ENCODE measurements at regions of chr5 and their contacts with region 1.

Region 1: DNA sequence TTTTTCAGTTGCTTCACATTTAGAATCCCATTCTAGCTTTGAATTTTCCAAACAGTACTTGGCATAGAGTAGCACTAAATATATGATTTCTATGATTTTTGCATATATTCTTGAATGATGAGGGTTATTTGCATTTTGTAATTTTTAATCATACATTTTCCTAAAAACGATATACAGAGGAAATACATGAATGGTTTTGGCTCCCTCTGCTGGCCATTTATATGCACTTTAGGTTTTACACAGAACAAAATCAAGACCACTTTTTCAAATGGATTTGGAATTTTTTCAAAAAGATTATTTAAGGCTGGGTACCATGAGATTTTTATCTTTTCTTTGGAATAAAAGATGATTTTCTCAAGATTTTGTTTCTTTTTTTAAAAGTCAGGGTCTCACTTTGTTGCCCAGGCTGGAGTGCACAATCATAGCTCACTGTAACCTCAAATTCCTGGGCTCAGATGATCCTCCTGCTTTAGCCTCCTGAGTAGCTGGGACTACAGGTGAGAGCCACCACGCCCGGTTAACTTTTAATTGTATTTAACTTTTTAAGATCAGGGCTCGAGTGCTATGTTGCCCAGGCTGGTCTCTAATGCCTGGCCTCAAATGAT is 16.7 kb upstream of the COMMD10 start:
- DNase-seq: no peak
- H3K4me3 ChIP-seq: no peak overlapping the region
- H3K27me3 ChIP-seq: peaks cover 4% of the 10 kb centered on the region
- CTCF ChIP-seq: peak; percentile 66

Region 2: DNA sequence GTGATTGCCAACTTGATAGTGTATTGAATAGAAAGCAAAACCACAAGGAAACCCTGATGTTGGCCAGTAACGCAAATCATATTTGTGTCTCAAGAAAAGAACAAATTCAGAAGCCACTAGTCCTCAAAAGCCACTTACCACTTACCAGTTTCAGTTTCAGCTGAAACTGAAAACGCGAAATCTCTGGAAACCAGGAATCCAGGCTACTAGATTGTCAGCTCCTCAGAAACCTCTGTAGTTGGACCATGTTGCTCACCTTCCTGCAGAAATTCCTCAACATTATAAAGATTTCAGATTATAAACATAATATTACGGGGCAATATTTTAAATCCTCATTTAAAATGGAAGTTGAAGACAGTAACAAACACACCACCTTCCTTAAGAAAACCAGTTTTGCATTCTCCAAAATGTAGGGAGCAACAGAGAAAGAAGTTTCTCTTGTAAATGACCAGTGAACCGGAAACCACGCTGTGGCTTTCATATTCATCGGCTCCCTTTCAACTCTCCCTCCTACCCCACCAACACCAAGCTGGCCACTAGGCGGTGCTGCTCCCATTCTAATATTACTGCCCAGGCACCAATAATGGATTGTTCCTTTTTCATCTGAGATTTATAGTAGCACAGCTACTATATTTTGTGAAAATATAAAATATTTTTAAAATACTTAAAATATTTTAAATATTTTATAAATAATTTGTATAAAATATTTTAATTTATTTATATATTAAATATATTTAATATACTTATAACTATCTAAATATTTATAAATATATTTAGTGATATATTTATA is 433.6 kb before region 1 on chr5:
- CTCF ChIA-PET with region 1: interaction called, 29 read pairs
- POLR2A ChIA-PET with region 1: no interaction called
- DNase-seq: no peak
- H3K4me3 ChIP-seq: peak overlapping the region; percentile 29
- H3K27me3 ChIP-seq: no peaks in the 10 kb centered on the region; the same call in 1 of the 2 replicates
- CTCF ChIP-seq: peak; percentile 87

Region 3: GRCh38 chr5:115888027-115888426 is 180.1 kb before region 1 on chr5:
- CTCF ChIA-PET with region 1: interaction called, 16 read pairs
- POLR2A ChIA-PET with region 1: no interaction called
- DNase-seq: peak; percentile 7
- H3K4me3 ChIP-seq: no peak overlapping the region
- H3K27me3 ChIP-seq: no peaks in the 10 kb centered on the region
- CTCF ChIP-seq: peak; percentile 23; the same call in 1 of the 2 replicates

Region 4: GRCh38 chr5:116078199-116078598 is 10.1 kb after region 1 on chr5:
- CTCF ChIA-PET with region 1: interaction called, 10 read pairs
- POLR2A ChIA-PET with region 1: no interaction called
- DNase-seq: no peak
- H3K4me3 ChIP-seq: no peak overlapping the region
- H3K27me3 ChIP-seq: no peaks in the 10 kb centered on the region
- CTCF ChIP-seq: no peak

Region 5: DNA sequence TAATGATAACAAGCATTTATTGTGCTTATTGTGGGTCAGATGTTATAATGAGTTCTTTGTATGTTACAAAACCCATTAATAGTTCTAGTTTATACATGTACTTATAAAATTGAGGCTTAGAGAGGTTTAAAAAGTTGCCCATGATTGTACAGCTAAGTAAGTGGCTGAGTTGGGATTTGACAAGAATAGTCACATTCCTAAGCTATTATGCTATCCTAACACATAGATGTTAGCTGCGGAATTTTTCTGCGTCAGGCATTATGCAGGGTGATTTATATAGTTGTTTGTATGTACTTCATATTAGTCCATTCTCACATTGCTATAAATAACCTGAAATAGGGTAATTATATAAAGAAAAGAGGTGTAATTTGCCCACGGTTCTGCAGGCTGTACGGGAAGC is 29.2 kb after region 1 on chr5:
- CTCF ChIA-PET with region 1: no interaction called
- POLR2A ChIA-PET with region 1: no interaction called
- DNase-seq: no peak
- H3K4me3 ChIP-seq: no peak overlapping the region
- H3K27me3 ChIP-seq: no peaks in the 10 kb centered on the region
- CTCF ChIP-seq: no peak

Measured in BJ (cell line).